Activated T-helper 2 cell treated with anti-CD3 and anti-CD28 coated beads, Interferon-gamma antibody, Interleukin-2, Interleukin-4, amounts not matched to agents 10 μg/mL and 5 μg/mL and 100 μg/mL, durations not matched to agents 14 hours and 24 hours and 36 hours (primary cell): ENCODE measurements at regions of chr12 and their contacts with region 1.

Region 1: GRCh38 chr12:95548539-95549391 is 2.5 kb downstream of the USP44 start:
- DNase-seq: peak; percentile 62
- H3K4me3 Mint-ChIP-seq: peak overlapping the region; percentile 88
- H3K27ac Mint-ChIP-seq: peak overlapping the region; percentile 63
- H3K4me1 Mint-ChIP-seq: peaks cover 45% of the 10 kb centered on the region
- H3K27me3 Mint-ChIP-seq: peaks cover 15% of the 10 kb centered on the region

Region 2: DNA sequence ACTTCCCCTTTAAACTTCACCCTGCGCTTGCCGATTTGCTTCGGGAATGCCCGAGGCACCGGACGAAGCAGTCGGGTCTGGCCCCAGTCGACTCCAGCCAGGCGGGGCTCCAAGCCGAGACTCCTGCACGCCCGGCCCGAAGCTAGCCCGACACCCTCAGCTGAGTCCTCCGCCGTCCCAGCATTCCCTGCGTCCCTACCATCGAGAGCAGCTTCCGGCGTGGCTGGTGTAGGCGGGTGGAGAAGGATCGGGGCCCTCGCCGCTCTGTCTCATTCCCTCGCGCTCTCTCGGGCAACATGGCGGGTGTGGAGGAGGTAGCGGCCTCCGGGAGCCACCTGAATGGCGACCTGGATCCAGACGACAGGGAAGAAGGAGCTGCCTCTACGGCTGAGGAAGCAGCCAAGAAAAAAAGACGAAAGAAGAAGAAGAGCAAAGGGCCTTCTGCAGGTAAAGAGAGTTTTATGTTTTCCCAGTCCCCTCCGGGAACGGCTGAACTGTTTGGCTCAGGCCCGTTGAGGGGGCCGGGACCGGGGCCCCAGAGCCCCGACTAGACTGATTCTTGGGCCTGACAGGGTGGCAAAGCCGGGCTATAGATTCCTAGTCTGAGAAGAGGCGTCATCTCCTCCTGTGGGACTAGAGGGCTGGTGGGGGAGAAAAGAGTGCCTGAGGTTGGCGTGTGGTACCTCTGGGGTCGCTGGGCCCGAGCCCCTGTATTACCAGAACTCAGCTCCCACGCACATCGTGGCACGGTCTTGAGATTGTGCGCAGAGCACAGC is 74.7 kb before region 1 on chr12 and contains the start of gene METAP2:
- intact Hi-C with region 1: loop called (anchors 5 kb)
- DNase-seq: peak; percentile 87
- H3K4me3 Mint-ChIP-seq: peak within 1 kb of the TSS; percentile 100
- H3K27ac Mint-ChIP-seq: peak within 1 kb of the TSS; percentile 99
- H3K4me1 Mint-ChIP-seq: peaks cover 29% of the 10 kb centered on the region
- H3K27me3 Mint-ChIP-seq: no peaks in the 10 kb centered on the region
- total RNA-seq, gene METAP2: 111 and 113 TPM in 2 replicates

Region 3: GRCh38 chr12:95790033-95790911 is 241.5 kb after region 1 on chr12 and contains the start of gene NTN4:
- intact Hi-C with region 1: loop called (anchors 10 kb)
- DNase-seq: peak; percentile 16
- H3K4me3 Mint-ChIP-seq: peak within 1 kb of the TSS; percentile 70
- H3K27ac Mint-ChIP-seq: no peak within 1 kb of the TSS
- H3K4me1 Mint-ChIP-seq: peaks cover 9% of the 10 kb centered on the region
- H3K27me3 Mint-ChIP-seq: peaks cover 84% of the 10 kb centered on the region
- total RNA-seq, gene NTN4: not detected in 2 replicates